ENCODE measurements at regions of chr19 and their contacts with region 1.

Region 1: GRCh38 chr19:12974301-12975220 is 5.2 kb downstream of the DAND5 start:
- DNase-seq: no peak
- ATAC-seq: no peak
- H3K4me3 ChIP-seq: no peak overlapping the region
- H3K27ac ChIP-seq: no peak overlapping the region
- H3K4me1 ChIP-seq: peaks cover 0 to 28% (median 4%) of the 10 kb centered on the region in 12 donors
- H3K27me3 ChIP-seq: no peaks in the 10 kb centered on the region
- CTCF ChIP-seq: no peak
- POLR2A ChIP-seq: no peak

Region 2: GRCh38 chr19:13002166-13002898 is 27.8 kb after region 1 on chr19:
- intact Hi-C with region 1: no loop called
- DNase-seq: peak; percentile 72 to 87 (median 76)
- ATAC-seq: peak; percentile 67 to 81 (median 74)
- H3K4me3 ChIP-seq: peak overlapping the region in 11 of 12 donors; percentile 8 to 51 (median 38)
- H3K27ac ChIP-seq: peak overlapping the region; percentile 80 to 97 (median 92)
- H3K4me1 ChIP-seq: peaks cover 0 to 80% (median 37%) of the 10 kb centered on the region in 12 donors
- H3K27me3 ChIP-seq: no peaks in the 10 kb centered on the region
- CTCF ChIP-seq: peak in 7 of 12 donors; percentile 7 to 51 (median 32)
- POLR2A ChIP-seq: no peak

Region 3: DNA sequence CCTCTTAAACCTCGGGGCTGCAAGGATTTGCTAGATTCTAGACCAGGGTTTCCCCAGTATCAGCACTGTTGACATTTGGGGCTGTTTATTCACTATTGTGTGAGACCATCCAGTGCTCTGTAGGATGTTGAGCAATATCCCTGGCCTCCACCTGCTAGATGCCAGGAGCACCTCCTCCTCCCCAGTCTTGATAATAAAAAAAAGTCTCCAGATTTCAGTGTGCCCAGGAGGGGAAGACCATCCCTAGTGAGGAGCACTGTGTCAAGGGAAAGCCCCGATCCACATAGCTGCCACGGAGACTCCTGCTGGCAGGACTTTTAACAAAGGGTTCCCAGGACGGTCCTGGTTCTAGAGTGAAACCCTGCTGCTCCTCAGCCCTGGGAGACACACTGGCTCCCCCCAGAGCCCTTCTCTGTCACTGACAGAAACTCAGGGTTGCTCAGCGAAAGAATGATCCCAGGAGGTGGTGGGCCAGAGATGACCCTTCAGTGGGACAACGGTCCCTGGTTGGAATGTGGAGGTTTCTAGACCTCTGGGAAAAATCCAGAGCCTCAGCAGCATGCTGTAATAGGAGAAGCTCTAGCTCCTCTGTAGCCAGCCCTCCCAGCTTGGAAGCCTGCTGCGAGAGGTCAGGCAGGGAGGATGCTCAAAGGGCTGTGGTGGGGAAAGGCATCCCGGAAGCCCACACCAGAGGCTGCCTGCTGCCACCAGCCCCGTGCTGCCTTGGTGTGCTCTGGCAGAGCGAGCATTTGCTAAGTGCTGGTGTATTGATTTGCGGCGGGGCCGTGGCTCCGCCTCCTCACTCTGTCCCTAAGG is 107.8 kb after region 1 on chr19:
- intact Hi-C with region 1: no loop called
- DNase-seq: peak in 2 of 5 donors; percentile 50 to 53
- ATAC-seq: peak; percentile 22 to 54 (median 47)
- H3K4me3 ChIP-seq: no peak overlapping the region
- H3K27ac ChIP-seq: peak overlapping the region in 10 of 12 donors; percentile 6 to 63 (median 46)
- H3K4me1 ChIP-seq: peaks cover 5 to 67% (median 47%) of the 10 kb centered on the region in 12 donors
- H3K27me3 ChIP-seq: no peaks in the 10 kb centered on the region
- CTCF ChIP-seq: peak in 9 of 12 donors; percentile 16 to 56 (median 40)
- POLR2A ChIP-seq: no peak

Region 4: DNA sequence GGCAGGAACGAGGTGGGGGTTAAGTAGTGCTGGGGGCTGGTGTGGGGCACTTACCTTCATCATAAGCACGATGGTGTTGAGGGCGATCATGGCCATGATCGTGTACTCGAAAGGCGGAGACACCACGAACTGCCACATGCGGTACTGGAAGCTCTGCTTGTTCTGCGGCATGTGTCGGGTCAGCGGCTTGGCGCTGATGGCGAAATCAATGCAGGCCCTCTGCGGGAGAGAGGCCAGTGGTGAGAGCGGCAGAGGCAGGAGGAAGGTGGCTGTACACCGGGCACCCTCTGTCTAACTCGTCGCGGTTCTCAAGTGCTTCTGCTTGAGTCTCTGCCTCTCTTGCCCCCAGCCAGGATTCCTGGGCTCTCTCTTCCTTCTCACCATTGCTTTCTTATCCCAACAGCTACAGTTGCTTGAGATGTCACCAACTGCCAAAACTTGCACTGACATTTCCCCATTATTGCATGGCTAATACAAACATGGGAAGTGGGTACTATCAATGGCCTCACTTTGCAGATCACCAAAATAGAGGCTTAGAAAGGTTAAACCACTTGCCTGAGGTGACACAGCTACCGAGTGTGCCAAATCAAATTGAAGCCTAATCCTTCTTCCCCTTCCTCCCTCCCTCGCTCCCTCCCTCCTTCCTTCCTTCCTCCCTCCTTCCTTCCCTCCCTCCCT is 280.6 kb after region 1 on chr19:
- intact Hi-C with region 1: loop called in 4 of 10 experiments (anchors 2 to 5 kb)
- DNase-seq: no peak
- ATAC-seq: no peak
- H3K4me3 ChIP-seq: no peak overlapping the region
- H3K27ac ChIP-seq: no peak overlapping the region
- H3K4me1 ChIP-seq: no peaks in the 10 kb centered on the region
- H3K27me3 ChIP-seq: peaks cover 0 to 16% (median 0%) of the 10 kb centered on the region in 9 donors
- CTCF ChIP-seq: no peak
- POLR2A ChIP-seq: no peak

Region 5: GRCh38 chr19:13269348-13269747 is 294.8 kb after region 1 on chr19:
- intact Hi-C with region 1: loop called in 3 of 10 experiments (anchors 5 kb)
- DNase-seq: no peak
- ATAC-seq: no peak
- H3K4me3 ChIP-seq: no peak overlapping the region
- H3K27ac ChIP-seq: no peak overlapping the region
- H3K4me1 ChIP-seq: no peaks in the 10 kb centered on the region
- H3K27me3 ChIP-seq: peaks cover 0 to 5% (median 0%) of the 10 kb centered on the region in 9 donors
- CTCF ChIP-seq: no peak
- POLR2A ChIP-seq: no peak

Region 6: DNA sequence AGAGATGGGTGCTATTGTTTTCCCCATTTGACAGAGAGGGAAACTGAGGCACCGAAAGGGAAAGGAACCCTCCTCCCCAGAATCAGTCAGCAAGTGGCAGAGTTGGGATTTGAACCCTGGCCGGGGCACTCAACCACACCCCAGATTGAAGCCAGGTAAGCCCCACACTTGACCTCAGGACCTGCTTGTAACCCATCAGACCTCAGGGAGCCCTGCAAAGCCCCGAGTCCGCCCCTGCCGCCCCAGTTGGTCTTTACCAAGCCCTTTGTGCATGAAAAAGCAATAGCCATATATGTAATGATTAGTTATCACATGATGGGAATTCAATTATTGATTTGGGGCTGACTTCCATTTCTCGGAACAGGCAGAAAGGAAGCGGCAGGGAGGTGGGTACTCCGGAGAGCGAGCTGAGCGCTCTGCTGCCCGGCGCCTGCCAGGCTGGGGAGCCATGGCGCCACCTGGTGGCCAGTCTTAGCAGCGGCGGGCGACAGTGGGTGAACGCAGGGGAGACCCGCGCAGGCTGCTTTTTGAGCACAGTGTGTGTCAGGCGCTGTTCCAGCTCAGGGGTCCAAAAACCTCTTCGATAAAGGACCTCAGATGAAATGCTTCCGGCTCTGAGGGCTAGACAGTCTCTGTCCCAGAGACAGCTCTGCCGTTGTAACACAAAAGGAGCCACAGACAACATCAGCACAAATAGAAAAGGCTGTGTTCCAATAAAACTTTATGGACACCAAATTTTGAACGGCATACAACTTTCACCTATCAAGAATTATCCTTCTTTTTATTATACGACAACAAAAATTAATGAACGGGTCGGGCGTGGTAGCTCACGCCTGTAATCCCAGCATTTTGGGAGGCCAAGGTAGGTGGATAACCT is 614.6 kb after region 1 on chr19:
- intact Hi-C with region 1: loop called in 6 of 10 experiments (anchors 5 to 10 kb)
- DNase-seq: peak; percentile 54 to 87 (median 65)
- ATAC-seq: peak in 3 of 4 donors; percentile 73 to 92 (median 83)
- H3K4me3 ChIP-seq: no peak overlapping the region
- H3K27ac ChIP-seq: no peak overlapping the region
- H3K4me1 ChIP-seq: no peaks in the 10 kb centered on the region
- H3K27me3 ChIP-seq: peaks cover 0 to 67% (median 8%) of the 10 kb centered on the region in 9 donors
- CTCF ChIP-seq: peak; percentile 89 to 100 (median 96)
- POLR2A ChIP-seq: no peak

Region 7: GRCh38 chr19:13597640-13598039 is 623.1 kb after region 1 on chr19:
- intact Hi-C with region 1: loop called in 2 of 10 experiments (anchors 10 kb)
- DNase-seq: peak in 4 of 5 donors; percentile 26 to 54 (median 42)
- ATAC-seq: peak; percentile 75 to 83 (median 78)
- H3K4me3 ChIP-seq: no peak overlapping the region
- H3K27ac ChIP-seq: no peak overlapping the region
- H3K4me1 ChIP-seq: no peaks in the 10 kb centered on the region
- H3K27me3 ChIP-seq: peaks cover 0 to 52% (median 0%) of the 10 kb centered on the region in 9 donors
- CTCF ChIP-seq: peak; percentile 34 to 73 (median 64)
- POLR2A ChIP-seq: no peak